ENCODE measurements at regions of chrX and their contacts with region 1.

Region 1: DNA sequence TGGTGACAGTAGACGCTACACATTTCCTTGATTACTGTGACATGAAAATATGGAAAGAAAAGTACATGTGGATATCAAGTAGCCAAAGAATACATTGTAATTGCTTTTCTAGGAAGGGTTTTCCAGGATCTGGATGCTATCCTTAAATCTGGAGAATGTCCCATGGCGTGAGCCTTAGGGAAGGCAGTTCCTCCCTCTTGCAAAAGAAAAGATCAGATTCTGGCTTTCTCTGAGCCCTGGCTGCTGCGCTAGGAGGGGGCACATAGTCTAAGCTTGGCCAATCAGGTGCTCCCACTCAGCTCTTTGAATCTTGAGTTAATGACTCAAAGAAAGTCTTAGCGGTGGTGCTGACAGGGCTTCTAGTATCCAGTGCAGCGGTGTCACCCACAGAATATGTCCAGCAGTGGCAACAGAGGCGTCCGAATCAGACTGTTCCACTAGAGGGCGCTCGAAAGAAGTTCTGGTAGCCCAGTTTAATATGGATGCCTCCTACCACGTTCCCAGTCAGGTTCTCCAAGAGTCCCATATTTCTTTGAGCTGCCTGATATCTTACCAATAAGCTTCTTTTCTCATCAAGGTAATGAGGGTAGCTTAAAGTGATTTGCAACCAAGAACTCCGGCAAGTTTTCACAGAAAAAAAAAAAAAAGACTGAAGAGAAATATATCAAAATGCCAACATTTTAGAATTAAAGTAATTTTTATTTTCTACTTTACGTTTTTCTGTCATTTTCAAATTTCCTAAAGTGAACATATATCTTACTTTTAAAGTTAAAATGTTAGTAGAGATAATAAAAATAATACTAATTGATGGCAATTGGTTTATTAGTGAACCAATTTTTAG is 213.4 kb upstream of the S100G start:
- DNase-seq: peak; percentile 74
- H3K4me3 Mint-ChIP-seq: no peak overlapping the region
- H3K27ac Mint-ChIP-seq: no peak overlapping the region
- H3K4me1 Mint-ChIP-seq: peaks cover 8% of the 10 kb centered on the region
- H3K27me3 Mint-ChIP-seq: no peaks in the 10 kb centered on the region

Region 2: DNA sequence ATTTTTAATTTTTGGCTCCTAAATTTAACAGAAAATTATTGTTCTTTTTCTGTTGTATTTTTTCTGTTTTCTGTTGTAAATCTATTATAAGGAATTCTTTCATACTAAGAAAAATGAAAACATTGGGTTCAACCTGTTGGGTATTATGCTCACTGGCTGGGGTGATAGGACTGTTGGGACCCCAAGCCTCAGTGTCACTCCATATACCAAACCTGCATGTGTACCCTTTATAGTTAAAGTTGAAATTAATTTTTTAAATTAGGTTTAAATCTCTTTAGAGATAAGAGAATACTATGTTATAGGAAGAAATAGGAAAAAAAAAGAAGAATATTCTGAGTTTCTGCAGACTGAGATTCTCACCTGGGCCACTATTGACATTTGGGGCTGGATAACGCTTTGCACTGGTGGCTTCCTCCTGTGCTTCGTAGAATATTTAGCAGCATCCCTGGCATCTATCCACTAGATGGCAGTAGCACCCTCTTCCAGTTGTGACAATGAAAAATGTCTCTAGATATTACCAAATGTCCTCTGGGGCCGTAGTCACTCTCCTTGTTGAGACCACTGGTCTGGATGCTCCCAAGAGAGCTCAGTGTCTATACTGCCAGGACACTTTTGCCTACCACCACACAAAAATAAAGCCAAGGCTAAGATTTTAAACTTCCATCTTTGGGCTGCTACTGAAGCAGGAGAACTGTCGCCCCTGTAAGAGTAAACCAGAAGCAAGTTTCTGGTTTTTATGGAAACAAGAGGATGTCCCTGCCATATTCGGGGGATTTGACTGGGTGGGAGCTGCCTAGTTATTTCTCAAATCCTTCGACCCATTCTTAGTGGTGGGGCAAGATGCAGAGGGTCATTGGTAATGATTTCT is 749.5 kb before region 1 on chrX:
- CTCF ChIA-PET with region 1: interaction called, 3 read pairs
- POLR2A ChIA-PET with region 1: no interaction called
- intact Hi-C with region 1: loop called (anchors 5 kb)
- DNase-seq: peak; percentile 55
- H3K4me3 Mint-ChIP-seq: no peak overlapping the region
- H3K27ac Mint-ChIP-seq: no peak overlapping the region
- H3K4me1 Mint-ChIP-seq: peaks cover 8% of the 10 kb centered on the region
- H3K27me3 Mint-ChIP-seq: no peaks in the 10 kb centered on the region

Region 3: GRCh38 chrX:16333453-16333852 is 103.1 kb before region 1 on chrX:
- CTCF ChIA-PET with region 1: no interaction called
- POLR2A ChIA-PET with region 1: no interaction called
- intact Hi-C with region 1: no loop called
- DNase-seq: no peak
- H3K4me3 Mint-ChIP-seq: no peak overlapping the region
- H3K27ac Mint-ChIP-seq: no peak overlapping the region
- H3K4me1 Mint-ChIP-seq: peaks cover 2% of the 10 kb centered on the region
- H3K27me3 Mint-ChIP-seq: no peaks in the 10 kb centered on the region

Region 4: GRCh38 chrX:16670998-16671397 is 234.4 kb after region 1 on chrX:
- CTCF ChIA-PET with region 1: interaction called, 6 read pairs
- POLR2A ChIA-PET with region 1: no interaction called
- intact Hi-C with region 1: loop called (anchors 2 kb)
- DNase-seq: peak; percentile 20
- H3K4me3 Mint-ChIP-seq: no peak overlapping the region
- H3K27ac Mint-ChIP-seq: no peak overlapping the region
- H3K4me1 Mint-ChIP-seq: no peaks in the 10 kb centered on the region
- H3K27me3 Mint-ChIP-seq: no peaks in the 10 kb centered on the region

Region 5: DNA sequence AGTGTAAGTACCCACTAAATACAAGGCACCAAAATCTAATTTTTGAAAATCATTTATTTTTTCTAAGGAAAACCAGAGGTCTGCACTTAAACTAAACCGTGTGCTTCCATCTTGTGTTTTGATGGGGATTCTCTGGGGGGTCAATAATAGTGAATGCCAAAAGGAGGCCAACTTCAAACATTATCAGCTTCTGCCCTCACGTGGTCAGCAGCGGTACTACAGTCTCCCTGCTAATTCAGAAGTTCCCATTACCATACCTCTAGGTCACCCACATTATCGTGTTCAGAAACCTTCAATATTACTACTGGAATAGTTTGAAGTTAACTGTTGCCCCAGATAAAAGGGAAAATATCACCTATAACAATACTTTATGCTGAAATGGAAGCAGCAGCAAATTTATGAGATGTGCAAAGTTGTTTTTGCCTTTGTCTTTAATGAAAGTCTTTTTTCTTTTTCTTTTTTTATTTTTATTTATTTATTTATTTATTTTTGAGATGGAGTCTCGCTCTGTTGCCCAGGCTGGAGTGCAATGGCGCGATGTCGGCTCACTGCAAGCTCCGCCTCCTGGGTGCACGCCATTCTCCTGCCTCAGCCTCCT is 258.6 kb after region 1 on chrX:
- CTCF ChIA-PET with region 1: interaction called, 13 read pairs
- POLR2A ChIA-PET with region 1: no interaction called
- intact Hi-C with region 1: loop called (anchors 2 kb)
- DNase-seq: peak; percentile 65
- H3K4me3 Mint-ChIP-seq: no peak overlapping the region
- H3K27ac Mint-ChIP-seq: no peak overlapping the region
- H3K4me1 Mint-ChIP-seq: no peaks in the 10 kb centered on the region
- H3K27me3 Mint-ChIP-seq: no peaks in the 10 kb centered on the region